ENCODE measurements at regions of chr12 and their contacts with region 1.

Region 1: GRCh38 chr12:51424662-51425438 is at the start of gene SLC4A8:
- DNase-seq: no peak
- H3K4me3 ChIP-seq: peak within 1 kb of the TSS; percentile 77
- H3K27me3 ChIP-seq: no peaks in the 10 kb centered on the region
- CTCF ChIP-seq: peak; percentile 96
- polyA plus RNA-seq, gene SLC4A8: 4.9 and 7.3 TPM in 2 replicates

Region 2: GRCh38 chr12:51531978-51532497 is 107.2 kb after region 1 on chr12:
- CTCF ChIA-PET with region 1: interaction called, 82 read pairs
- POLR2A ChIA-PET with region 1: no interaction called
- DNase-seq: no peak
- H3K4me3 ChIP-seq: no peak overlapping the region
- H3K27me3 ChIP-seq: no peaks in the 10 kb centered on the region
- CTCF ChIP-seq: peak; percentile 96

Region 3: GRCh38 chr12:51823875-51824565 is 399.2 kb after region 1 on chr12:
- CTCF ChIA-PET with region 1: interaction called, 83 read pairs
- POLR2A ChIA-PET with region 1: interaction called, 3 read pairs
- DNase-seq: no peak
- H3K4me3 ChIP-seq: no peak overlapping the region
- H3K27me3 ChIP-seq: no peaks in the 10 kb centered on the region; the same call in 1 of the 2 replicates
- CTCF ChIP-seq: peak; percentile 64

Region 4: DNA sequence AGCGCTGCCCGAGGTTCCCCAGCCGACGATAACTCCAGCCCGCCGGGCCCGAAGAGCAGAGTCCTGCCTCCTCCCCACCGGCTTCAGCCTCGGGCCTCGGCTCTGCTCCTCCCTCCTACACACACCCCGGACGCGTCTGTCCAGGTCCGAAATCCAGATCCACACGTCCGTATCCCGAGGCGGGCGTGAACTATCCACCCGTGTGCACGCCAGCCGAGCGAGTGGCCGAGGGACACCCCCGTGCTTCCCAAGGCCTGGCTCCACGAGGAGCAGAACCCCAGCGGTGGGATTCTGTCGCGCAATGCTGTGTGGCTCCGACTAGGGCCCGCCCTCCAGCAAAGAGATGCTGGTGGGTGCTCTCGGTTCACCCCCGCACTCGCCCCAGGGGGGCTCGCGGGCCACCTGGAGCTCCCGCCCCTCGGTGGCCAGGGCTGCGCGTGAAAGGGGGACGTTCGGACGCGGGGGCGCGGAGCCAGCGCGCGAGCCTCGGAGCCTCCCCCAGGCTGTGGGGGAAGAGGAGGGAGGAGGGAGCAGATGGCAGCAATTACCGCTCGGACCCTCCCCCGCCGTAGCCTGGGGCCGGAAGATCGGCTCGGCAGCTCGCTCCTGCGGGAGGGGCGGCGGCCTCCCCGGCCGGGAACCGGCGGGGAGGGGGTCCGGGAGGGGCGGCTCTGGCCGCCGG is 444.1 kb after region 1 on chr12:
- CTCF ChIA-PET with region 1: interaction called, 63 read pairs
- POLR2A ChIA-PET with region 1: no interaction called
- DNase-seq: no peak
- H3K4me3 ChIP-seq: peak overlapping the region; percentile 41
- H3K27me3 ChIP-seq: peaks cover 3% of the 10 kb centered on the region
- CTCF ChIP-seq: 0 out of 2 replicates have a peak, but pooled peaks have one; percentile 8

Region 5: GRCh38 chr12:52461691-52462090 is 1036.8 kb after region 1 on chr12:
- CTCF ChIA-PET with region 1: no interaction called
- POLR2A ChIA-PET with region 1: no interaction called
- DNase-seq: no peak
- H3K4me3 ChIP-seq: no peak overlapping the region
- H3K27me3 ChIP-seq: no peaks in the 10 kb centered on the region
- CTCF ChIP-seq: no peak

Measured in BJ (cell line).